GM23248 (cell line): ENCODE measurements at regions of chr9 and their contacts with region 1.

Region 1: DNA sequence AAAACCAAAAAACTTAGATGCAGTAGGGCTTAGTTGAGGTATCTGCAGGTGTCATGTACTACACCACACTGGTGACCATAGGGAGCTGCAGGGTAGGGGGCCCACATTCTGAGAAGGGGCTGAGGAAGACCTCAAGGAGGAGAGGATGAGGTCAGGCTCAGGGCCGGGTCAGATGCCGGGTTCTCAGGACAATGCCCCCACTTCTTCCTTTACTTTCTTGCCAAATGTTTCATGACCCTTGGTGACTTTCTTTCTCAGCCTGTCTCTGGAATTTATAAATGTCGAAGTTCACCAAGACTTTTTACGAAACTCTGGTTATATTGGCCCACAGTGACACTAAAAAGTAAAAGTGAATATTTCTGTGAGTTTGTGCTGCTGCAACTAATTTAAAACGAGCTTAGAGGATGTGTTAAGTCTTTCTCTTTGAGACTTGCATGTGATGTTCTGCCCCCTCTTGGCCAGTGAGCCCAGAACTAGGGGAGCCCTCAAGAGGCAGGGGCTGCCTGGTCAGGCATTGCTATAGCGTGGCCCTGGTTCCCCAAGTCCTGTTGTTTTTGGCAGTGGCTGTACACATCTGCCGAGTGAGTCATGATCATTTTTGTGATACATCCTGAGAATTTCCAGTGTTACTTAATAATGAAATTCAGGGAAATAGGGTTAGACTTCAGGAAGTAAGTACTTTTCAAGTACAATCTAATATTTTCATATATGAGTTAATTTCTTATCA is 11.2 kb downstream of the ACO1 start:
- DNase-seq: peak; percentile 97
- H3K4me3 ChIP-seq: peak overlapping the region; percentile 46
- H3K27ac ChIP-seq: peak overlapping the region; percentile 77
- H3K4me1 ChIP-seq: peaks cover 41% of the 10 kb centered on the region
- H3K27me3 ChIP-seq: no peaks in the 10 kb centered on the region

Region 2: GRCh38 chr9:32456564-32456963 is 60.9 kb after region 1 on chr9:
- in situ Hi-C with region 1: no loop called
- DNase-seq: no peak
- H3K4me3 ChIP-seq: no peak overlapping the region
- H3K27ac ChIP-seq: no peak overlapping the region
- H3K4me1 ChIP-seq: peaks cover 7% of the 10 kb centered on the region; the same call in 1 of the 2 replicates
- H3K27me3 ChIP-seq: no peaks in the 10 kb centered on the region

Region 3: GRCh38 chr9:32566770-32567169 is 171.1 kb after region 1 on chr9:
- in situ Hi-C with region 1: loop called (anchors 10 kb)
- DNase-seq: no peak
- H3K4me3 ChIP-seq: no peak overlapping the region
- H3K27ac ChIP-seq: no peak overlapping the region
- H3K4me1 ChIP-seq: peaks cover 8% of the 10 kb centered on the region
- H3K27me3 ChIP-seq: no peaks in the 10 kb centered on the region